GM12878 (cell line): ENCODE measurements at regions of chr11 and their contacts with region 1.

Region 1: DNA sequence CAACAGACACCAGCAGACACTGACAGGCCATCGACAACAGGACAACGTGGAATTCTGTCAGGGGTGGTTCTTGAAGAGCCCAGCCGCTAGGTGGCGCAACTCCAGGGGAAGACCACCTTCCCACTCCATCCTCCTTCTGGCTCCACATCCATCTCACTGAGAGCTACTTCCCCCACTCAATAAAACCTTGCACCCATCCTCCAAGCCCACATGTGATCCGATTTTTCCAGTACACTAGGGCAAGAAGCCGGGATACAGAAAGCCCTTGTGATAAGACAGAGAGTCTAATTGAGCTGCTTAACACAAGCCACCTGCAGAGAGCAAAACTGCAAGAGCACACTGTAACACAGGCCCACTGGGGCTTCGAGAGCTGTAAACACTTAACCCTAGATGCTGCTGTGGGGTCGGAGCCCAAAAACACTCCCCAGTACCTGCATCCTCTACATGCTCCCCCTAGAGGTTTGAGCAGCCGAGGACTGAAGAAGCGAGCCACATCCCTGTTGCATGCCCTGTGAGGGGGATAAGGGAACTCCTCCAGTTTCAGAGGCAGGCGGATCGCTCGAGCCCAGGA is 11.5 kb upstream of the RAB39A start:
- DNase-seq: no peak
- ATAC-seq: peak; percentile 91
- H3K4me3 ChIP-seq: no peak overlapping the region
- H3K27ac ChIP-seq: no peak overlapping the region
- H3K4me1 ChIP-seq: no peaks in the 10 kb centered on the region
- H3K27me3 ChIP-seq: no peaks in the 10 kb centered on the region
- CTCF ChIP-seq: peak; percentile 60 to 82 (median 70)
- EP300 ChIP-seq: no peak
- POLR2A ChIP-seq: no peak
- RAD21 ChIP-seq: peak; percentile 25; the same call in 1 of the 2 replicates

Region 2: GRCh38 chr11:107864591-107864990 is 52.2 kb before region 1 on chr11:
- CTCF ChIA-PET with region 1: interaction called, 21 read pairs
- POLR2A ChIA-PET with region 1: no interaction called
- RAD21 ChIA-PET with region 1: no interaction called
- SMC1A ChIA-PET with region 1: interaction called, 4 read pairs
- in situ Hi-C with region 1: no loop called
- intact Hi-C with region 1: no loop called
- DNase-seq: no peak
- ATAC-seq: no peak; the same call in 2 of the 3 replicates
- H3K4me3 ChIP-seq: no peak overlapping the region
- H3K27ac ChIP-seq: peak overlapping the region; percentile 29; the same call in 1 of the 2 replicates
- H3K4me1 ChIP-seq: peaks cover 16% of the 10 kb centered on the region
- H3K27me3 ChIP-seq: no peaks in the 10 kb centered on the region
- CTCF ChIP-seq: no peak
- EP300 ChIP-seq: no peak
- POLR2A ChIP-seq: no peak
- RAD21 ChIP-seq: no peak

Region 3: GRCh38 chr11:107928046-107928766 is 11.4 kb after region 1 on chr11 and contains the start of gene RAB39A:
- CTCF ChIA-PET with region 1: interaction called, 36 read pairs
- POLR2A ChIA-PET with region 1: interaction called, 6 read pairs
- RAD21 ChIA-PET with region 1: no interaction called
- SMC1A ChIA-PET with region 1: interaction called, 6 read pairs
- in situ Hi-C with region 1: no loop called
- intact Hi-C with region 1: no loop called
- DNase-seq: peak; percentile 95
- ATAC-seq: peak; percentile 96
- H3K4me3 ChIP-seq: peak within 1 kb of the TSS; percentile 94
- H3K27ac ChIP-seq: peak within 1 kb of the TSS; percentile 69
- H3K4me1 ChIP-seq: peaks cover 13% of the 10 kb centered on the region; the same call in 1 of the 2 replicates
- H3K27me3 ChIP-seq: no peaks in the 10 kb centered on the region
- CTCF ChIP-seq: no peak
- EP300 ChIP-seq: no peak
- POLR2A ChIP-seq: peak; percentile 58; the same call in 1 of the 2 replicates
- RAD21 ChIP-seq: no peak
- polyA plus RNA-seq, gene RAB39A: 0.10 to 0.18 TPM